T-cell (primary cell): ENCODE measurements at regions of chr5 and their contacts with region 1.

Region 1: DNA sequence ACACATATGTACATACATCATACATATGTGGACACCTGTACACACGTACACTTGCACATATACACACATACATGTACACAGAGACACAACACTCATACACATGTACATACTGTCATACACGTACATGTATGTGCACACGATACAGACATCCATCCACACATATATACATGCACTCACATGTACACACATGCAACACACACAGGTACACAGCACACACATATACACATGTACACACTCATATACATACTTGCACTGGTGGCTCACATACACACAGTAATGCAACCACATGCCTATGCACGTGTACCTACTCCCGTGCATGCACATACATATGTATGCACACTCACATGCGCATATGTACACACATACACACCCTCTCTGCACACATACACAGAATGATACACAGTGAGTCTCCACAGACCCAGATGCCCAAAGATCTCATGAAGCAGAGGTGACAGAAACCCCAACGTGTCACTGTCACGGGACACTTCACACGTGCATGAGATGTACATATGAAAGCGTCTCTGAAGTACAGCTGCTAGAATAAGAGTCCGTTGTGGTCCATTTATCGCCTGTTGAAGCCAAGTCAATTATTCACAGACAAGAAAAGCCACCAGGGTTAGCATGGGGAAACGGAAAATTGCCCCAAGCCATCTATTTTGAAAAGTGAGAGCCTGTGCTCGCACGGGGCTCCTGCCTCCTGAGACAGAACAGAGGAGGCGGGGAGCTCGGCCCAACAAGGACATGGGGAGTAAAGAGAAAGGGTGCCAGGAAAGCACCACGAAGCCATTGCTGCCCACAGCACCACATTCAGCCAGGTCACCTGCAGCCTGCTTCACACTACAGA is 25.0 kb downstream of the LPCAT1 start:
- DNase-seq: no peak
- ATAC-seq: no peak
- H3K4me3 ChIP-seq: no peak overlapping the region
- H3K4me3 Mint-ChIP-seq: no peak overlapping the region
- H3K27ac ChIP-seq: no peak overlapping the region
- H3K27ac Mint-ChIP-seq: no peak overlapping the region
- H3K4me1 ChIP-seq: peaks cover 8 to 82% of the 10 kb centered on the region in 2 experiments
- H3K4me1 Mint-ChIP-seq: peaks cover 28 to 59% (median 44%) of the 10 kb centered on the region in 3 donors
- H3K27me3 ChIP-seq: no peaks in the 10 kb centered on the region
- H3K27me3 Mint-ChIP-seq: no peaks in the 10 kb centered on the region

Region 2: GRCh38 chr5:1484730-1485578 is 13.8 kb before region 1 on chr5:
- CTCF ChIA-PET with region 1: no interaction called
- POLR2A ChIA-PET with region 1: no interaction called
- DNase-seq: no peak
- ATAC-seq: no peak
- H3K4me3 ChIP-seq: no peak overlapping the region
- H3K4me3 Mint-ChIP-seq: no peak overlapping the region
- H3K27ac ChIP-seq: no peak overlapping the region
- H3K27ac Mint-ChIP-seq: peak overlapping the region in 1 of 2 donors; percentile 49
- H3K4me1 ChIP-seq: peaks cover 0 to 28% of the 10 kb centered on the region in 2 experiments
- H3K4me1 Mint-ChIP-seq: peaks cover 6 to 21% (median 9%) of the 10 kb centered on the region in 3 donors
- H3K27me3 ChIP-seq: no peaks in the 10 kb centered on the region
- H3K27me3 Mint-ChIP-seq: no peaks in the 10 kb centered on the region

Region 3: DNA sequence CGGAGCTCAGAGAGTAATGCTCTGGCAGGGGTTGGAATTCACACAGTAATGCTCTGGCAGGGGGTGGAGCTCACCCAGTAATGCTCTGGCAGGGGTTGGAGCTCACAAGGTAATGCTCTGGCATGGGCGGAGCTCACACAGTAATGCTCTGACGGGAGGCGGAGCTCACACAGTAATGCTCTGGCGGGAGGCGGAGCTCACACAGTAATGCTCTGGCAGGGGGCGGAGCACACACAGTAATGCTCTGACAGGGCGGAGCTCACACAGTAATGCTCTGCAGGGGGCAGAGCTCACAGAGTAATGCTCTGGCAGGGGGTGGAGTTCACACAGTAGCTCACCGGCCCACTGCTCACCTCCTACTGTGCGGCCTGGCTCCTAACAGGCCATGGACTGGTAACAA is 72.2 kb after region 1 on chr5:
- CTCF ChIA-PET with region 1: interaction called in 1 of 2 experiments, 14 read pairs
- POLR2A ChIA-PET with region 1: no interaction called
- DNase-seq: no peak
- ATAC-seq: no peak
- H3K4me3 ChIP-seq: no peak overlapping the region
- H3K4me3 Mint-ChIP-seq: no peak overlapping the region
- H3K27ac ChIP-seq: no peak overlapping the region
- H3K27ac Mint-ChIP-seq: no peak overlapping the region
- H3K4me1 ChIP-seq: no peaks in the 10 kb centered on the region
- H3K4me1 Mint-ChIP-seq: no peaks in the 10 kb centered on the region
- H3K27me3 ChIP-seq: no peaks in the 10 kb centered on the region
- H3K27me3 Mint-ChIP-seq: no peaks in the 10 kb centered on the region